Activated CD4-positive, alpha-beta memory T cell treated with anti-CD3 and anti-CD28 coated beads for 36 hours (primary cell): ENCODE measurements at regions of chr20 and their contacts with region 1.

Region 1: GRCh38 chr20:25057234-25058050 is 497 bp downstream of the ACSS1 start:
- DNase-seq: peak; percentile 87
- H3K4me3 Mint-ChIP-seq: peak overlapping the region; percentile 79
- H3K27ac Mint-ChIP-seq: peak overlapping the region; percentile 79
- H3K4me1 Mint-ChIP-seq: peaks cover 47% of the 10 kb centered on the region
- H3K27me3 Mint-ChIP-seq: no peaks in the 10 kb centered on the region

Region 2: GRCh38 chr20:23357767-23358591 is 1699.5 kb before region 1 on chr20:
- CTCF ChIA-PET with region 1: no interaction called
- POLR2A ChIA-PET with region 1: no interaction called
- intact Hi-C with region 1: loop called (anchors 5 kb)
- DNase-seq: peak; percentile 100
- H3K4me3 Mint-ChIP-seq: peak overlapping the region; percentile 92
- H3K27ac Mint-ChIP-seq: peak overlapping the region; percentile 93
- H3K4me1 Mint-ChIP-seq: peaks cover 19% of the 10 kb centered on the region
- H3K27me3 Mint-ChIP-seq: peaks cover 2% of the 10 kb centered on the region

Region 3: GRCh38 chr20:24948939-24949679 is 108.3 kb before region 1 on chr20 and contains the start of gene CST7:
- CTCF ChIA-PET with region 1: no interaction called
- POLR2A ChIA-PET with region 1: interaction called, 15 read pairs
- intact Hi-C with region 1: loop called (anchors 1 kb)
- DNase-seq: peak; percentile 93
- H3K4me3 Mint-ChIP-seq: peak within 1 kb of the TSS; percentile 83
- H3K27ac Mint-ChIP-seq: peak within 1 kb of the TSS; percentile 96
- H3K4me1 Mint-ChIP-seq: peaks cover 50% of the 10 kb centered on the region
- H3K27me3 Mint-ChIP-seq: no peaks in the 10 kb centered on the region
- total RNA-seq, gene CST7: 81.8 to 83.1 TPM

Region 4: DNA sequence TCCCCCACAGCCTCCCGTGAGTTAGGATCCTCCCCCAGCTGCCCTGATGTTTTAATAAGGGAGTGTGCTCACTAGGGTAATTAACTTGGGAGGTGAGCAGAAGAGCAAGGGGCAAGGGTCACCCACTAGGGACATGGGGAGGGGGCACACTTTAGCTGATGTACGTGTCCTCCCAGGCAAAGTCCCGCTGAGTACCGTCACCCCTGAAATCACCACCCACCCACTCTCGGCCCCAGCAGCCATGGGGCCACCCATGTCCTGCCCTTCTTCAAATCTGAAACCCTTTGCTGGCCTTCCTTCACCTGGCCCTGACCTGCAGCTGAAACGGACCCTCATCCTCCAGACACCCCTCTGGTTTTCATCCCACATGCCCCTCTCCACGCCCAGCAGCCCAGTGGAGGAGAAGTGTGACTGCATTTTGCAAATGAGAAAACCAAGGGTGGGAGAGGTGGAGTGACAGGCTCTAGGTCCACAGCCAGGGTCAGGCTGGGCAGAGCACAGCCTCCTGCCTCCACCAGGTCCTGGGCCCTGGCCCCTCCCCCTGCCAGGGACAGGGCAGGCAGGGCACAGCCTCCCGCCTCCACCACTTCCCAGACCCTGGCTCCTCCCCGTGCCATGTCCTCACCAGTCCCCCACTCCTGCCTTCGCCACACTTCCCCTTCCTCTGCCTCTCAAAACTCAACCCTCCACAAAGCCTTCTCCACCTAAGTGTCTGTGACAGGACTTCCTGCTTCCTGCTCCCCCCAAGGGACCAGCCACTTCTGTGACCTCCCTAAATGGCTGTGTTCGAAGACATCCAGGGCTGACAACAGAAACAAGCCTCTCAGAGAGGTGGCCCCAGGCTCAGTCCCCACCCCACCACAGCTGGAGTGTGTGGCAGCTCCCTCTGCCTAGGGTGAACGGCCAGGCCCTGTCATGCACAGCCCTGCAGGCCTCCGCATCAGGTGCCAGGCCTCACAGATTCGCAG is 14.6 kb before region 1 on chr20:
- CTCF ChIA-PET with region 1: interaction called, 3 read pairs
- POLR2A ChIA-PET with region 1: no interaction called
- intact Hi-C with region 1: loop called (anchors 2 kb)
- DNase-seq: peak; percentile 57
- H3K4me3 Mint-ChIP-seq: no peak overlapping the region
- H3K27ac Mint-ChIP-seq: peak overlapping the region; percentile 82
- H3K4me1 Mint-ChIP-seq: peaks cover 29% of the 10 kb centered on the region
- H3K27me3 Mint-ChIP-seq: no peaks in the 10 kb centered on the region